A673 (cell line): ENCODE measurements at regions of chr4 and their contacts with region 1.

Region 1: DNA sequence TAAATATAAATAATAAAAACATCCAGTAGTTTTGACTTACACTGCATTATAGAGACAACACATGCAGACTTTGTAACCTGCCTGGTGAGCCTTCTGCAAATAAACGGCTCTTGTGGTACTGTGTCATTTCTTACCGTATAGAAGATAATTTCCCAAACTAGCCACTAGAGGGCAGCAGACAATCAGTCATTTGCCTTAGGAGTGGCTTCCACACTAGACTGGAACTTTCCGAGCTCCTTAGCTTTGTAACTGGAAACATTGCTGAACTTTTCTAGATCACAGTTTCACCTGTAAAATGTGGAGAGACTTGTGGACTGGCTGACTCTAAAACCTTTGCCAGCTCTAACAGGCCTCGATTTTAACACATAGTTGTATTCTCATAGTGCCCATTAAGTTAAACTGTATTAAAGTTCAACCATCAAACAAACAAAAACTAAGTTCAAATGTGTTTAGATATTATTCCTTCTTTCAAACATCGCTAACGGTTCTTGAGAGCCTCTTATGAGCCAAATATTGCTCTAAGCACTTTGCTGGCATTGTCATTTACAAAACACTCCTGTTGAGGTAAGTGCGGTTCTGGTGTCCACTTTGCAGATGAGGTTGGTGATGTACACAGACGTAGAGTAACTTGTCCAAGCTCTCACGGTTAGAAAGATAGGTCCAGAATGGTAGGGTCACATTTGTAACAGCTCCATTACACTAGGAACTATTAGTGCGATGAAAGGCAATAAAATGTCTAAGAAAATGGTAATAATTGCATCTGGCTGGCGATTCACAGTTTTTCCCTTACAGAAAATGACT is 345.5 kb downstream of the ANK2 start:
- DNase-seq: peak; percentile 92
- H3K4me3 ChIP-seq: no peak overlapping the region
- H3K27ac ChIP-seq: no peak overlapping the region
- H3K4me1 ChIP-seq: peaks cover 4% of the 10 kb centered on the region
- H3K27me3 ChIP-seq: no peaks in the 10 kb centered on the region
- CTCF ChIP-seq: peak; percentile 79

Region 2: DNA sequence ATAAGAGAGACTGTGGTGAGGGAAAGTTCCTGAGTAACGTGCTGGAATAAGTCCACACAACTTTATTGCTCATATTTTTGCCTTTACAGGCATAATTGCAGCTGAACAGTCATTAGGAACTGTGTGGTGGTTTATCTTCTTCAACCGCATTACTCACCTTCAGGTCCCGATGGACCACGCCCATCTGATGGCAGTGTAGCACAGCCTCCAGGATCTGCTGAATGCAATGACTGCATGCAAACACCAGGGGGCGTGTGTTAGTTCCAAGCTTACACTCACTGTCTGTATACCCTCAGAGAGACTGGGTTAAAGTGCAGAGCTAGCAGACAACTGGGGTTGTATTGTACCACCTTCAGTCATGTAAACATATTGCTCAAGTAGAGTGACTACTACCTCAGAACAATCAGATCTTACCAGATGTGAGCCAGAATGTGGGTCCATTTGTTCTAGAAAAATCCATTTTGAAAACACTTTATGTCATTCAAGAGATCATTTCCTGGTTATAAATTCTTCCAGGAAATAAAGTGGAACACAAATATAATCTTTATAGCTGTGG is 152.6 kb after region 1 on chr4:
- CTCF ChIA-PET with region 1: interaction called, 3 read pairs
- POLR2A ChIA-PET with region 1: no interaction called
- intact Hi-C with region 1: loop called (anchors 2 kb)
- DNase-seq: peak; percentile 92
- H3K4me3 ChIP-seq: no peak overlapping the region
- H3K27ac ChIP-seq: no peak overlapping the region
- H3K4me1 ChIP-seq: peaks cover 3% of the 10 kb centered on the region
- H3K27me3 ChIP-seq: no peaks in the 10 kb centered on the region
- CTCF ChIP-seq: peak; percentile 97

Region 3: GRCh38 chr4:113952452-113953029 is 557.6 kb after region 1 on chr4:
- CTCF ChIA-PET with region 1: no interaction called
- POLR2A ChIA-PET with region 1: no interaction called
- intact Hi-C with region 1: loop called (anchors 1 kb)
- DNase-seq: peak; percentile 82
- H3K4me3 ChIP-seq: no peak overlapping the region
- H3K27ac ChIP-seq: no peak overlapping the region
- H3K4me1 ChIP-seq: peaks cover 59% of the 10 kb centered on the region
- H3K27me3 ChIP-seq: no peaks in the 10 kb centered on the region
- CTCF ChIP-seq: peak; percentile 93

Region 4: DNA sequence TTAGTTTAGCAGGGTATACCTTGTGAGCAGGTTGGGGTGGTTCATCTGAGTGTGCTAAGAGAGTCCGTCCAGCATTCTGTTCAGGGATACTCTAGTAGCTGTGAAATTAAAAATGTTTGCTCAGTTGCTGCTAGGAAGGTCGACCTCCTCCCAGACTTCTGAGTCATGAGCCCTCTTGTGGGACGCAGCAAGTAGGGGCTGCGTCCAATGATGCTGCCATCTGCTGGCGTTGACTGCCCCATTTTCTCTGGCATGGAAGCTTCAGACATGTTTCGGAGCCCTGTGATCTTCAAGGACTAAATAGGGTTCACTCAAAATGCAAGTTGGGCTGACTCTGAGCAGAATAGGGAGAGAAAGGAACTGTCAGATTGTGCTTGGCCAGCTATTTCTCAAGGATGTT is 785.6 kb after region 1 on chr4:
- CTCF ChIA-PET with region 1: no interaction called
- POLR2A ChIA-PET with region 1: no interaction called
- intact Hi-C with region 1: loop called (anchors 2 kb)
- DNase-seq: peak; percentile 82
- H3K4me3 ChIP-seq: no peak overlapping the region
- H3K27ac ChIP-seq: no peak overlapping the region
- H3K4me1 ChIP-seq: no peaks in the 10 kb centered on the region
- H3K27me3 ChIP-seq: no peaks in the 10 kb centered on the region
- CTCF ChIP-seq: peak; percentile 83